Sigmoid colon (tissue), 7 donors: ENCODE measurements at regions of chr7 and their contacts with region 1.

Region 1: DNA sequence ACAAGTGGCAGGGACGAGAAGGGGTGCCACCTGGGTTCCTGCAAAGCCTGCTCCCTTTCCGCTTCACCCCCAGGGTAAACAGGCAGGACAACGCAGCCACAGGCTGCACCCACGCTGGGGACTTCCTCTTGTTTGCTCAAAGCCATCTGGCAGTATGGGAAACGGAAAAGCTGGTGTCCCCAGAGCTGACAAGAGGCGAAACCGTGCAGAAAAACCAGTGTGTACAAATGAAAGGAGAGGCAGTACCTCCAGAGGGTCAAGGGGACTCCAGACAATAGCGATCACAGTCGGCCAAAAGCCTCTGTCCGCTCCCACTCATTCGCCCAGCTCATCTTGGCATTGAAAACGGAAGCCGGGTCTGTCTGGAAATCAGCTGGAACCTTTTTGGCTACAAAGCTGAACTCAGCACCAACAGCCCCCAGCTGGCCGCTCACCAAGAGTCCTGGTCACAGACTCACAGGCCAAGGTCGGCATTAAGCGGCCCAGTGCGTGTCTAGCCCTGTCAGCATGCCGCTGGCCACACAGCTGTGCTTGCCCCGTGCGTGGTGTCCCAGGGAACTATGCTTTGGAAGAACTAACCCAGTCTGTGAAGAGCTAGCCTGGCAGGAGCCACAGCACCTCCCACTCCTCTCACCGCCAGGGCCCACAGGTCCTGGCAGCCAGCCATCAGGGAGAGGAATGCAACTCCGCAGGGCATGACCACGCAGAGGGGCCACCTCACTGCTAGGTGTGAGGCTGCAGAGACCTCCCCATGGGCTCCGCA is 10.4 kb downstream of the TNS3 start:
- DNase-seq: peak; percentile 84
- H3K4me3 ChIP-seq: peak overlapping the region in 1 of 4 donors; percentile 23
- H3K27ac ChIP-seq: peak overlapping the region; percentile 63 to 87 (median 78)
- H3K4me1 ChIP-seq: peaks cover 0 to 68% (median 63%) of the 10 kb centered on the region in 4 donors
- H3K27me3 ChIP-seq: no peaks in the 10 kb centered on the region
- CTCF ChIP-seq: no peak
- EP300 ChIP-seq: no peak
- POLR2A ChIP-seq: no peak

Region 2: GRCh38 chr7:47435889-47436312 is 135.6 kb before region 1 on chr7:
- intact Hi-C with region 1: loop called (anchors 10 kb)
- DNase-seq: peak; percentile 87
- H3K4me3 ChIP-seq: no peak overlapping the region
- H3K27ac ChIP-seq: no peak overlapping the region
- H3K4me1 ChIP-seq: peaks cover 0 to 8% (median 5%) of the 10 kb centered on the region in 4 donors
- H3K27me3 ChIP-seq: no peaks in the 10 kb centered on the region
- CTCF ChIP-seq: peak; percentile 57 to 85 (median 80)
- EP300 ChIP-seq: no peak
- POLR2A ChIP-seq: no peak

Region 3: DNA sequence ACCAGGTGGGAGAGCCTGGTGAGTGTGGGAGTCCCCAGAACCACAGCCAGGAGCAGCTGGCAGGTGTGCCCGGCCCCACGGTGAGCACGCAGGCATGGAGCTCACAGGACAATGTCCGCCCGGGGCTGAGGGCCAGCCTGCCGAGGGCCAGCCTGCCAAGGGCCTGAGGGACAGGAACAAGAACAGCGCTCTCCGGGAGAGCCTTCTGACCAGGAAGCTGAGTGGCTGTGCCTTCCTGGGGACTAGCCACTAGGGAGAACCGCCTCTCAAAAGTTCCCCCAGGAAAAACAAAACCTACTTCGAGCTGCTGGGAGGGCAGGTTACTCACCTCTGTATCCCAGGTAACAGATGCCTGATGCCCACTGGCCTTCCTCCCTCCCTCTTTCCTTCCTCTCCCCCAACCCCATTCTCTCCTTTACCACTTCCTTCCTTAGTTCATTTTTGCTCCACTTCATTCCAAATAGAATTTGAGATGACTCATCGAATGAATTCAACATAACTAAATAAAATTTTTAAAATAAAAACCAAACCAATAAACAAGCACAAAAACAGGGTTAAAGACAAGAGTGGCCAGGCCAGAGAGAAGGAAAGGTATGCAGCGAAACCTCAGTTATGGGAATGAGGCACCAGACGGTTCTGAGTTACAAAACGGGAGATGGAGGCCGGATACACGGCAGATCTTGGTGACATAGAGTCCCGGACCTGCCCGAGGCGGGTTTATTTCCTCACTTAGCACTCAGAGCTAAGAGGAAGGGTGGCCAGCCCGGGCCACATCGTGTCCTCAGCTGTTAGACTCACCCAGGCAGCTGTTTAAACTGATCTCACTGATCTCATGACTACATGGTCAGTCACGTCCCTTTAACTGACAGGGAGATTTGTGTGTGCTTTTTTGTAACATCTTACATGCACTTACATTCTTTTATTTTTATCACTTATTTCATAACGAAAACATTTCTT is 118.1 kb before region 1 on chr7:
- intact Hi-C with region 1: no loop called
- DNase-seq: peak; percentile 89
- H3K4me3 ChIP-seq: peak overlapping the region in 1 of 4 donors; percentile 16
- H3K27ac ChIP-seq: peak overlapping the region; percentile 52 to 70 (median 61)
- H3K4me1 ChIP-seq: peaks cover 0 to 59% (median 51%) of the 10 kb centered on the region in 4 donors
- H3K27me3 ChIP-seq: no peaks in the 10 kb centered on the region
- CTCF ChIP-seq: no peak
- EP300 ChIP-seq: no peak
- POLR2A ChIP-seq: no peak

Region 4: GRCh38 chr7:47536661-47537611 is 34.6 kb before region 1 on chr7:
- intact Hi-C with region 1: loop called (anchors 5 kb)
- DNase-seq: peak; percentile 80
- H3K4me3 ChIP-seq: peak overlapping the region; percentile 45 to 62 (median 54)
- H3K27ac ChIP-seq: peak overlapping the region; percentile 8 to 62 (median 26)
- H3K4me1 ChIP-seq: peaks cover 0 to 49% (median 32%) of the 10 kb centered on the region in 4 donors
- H3K27me3 ChIP-seq: no peaks in the 10 kb centered on the region
- CTCF ChIP-seq: no peak
- EP300 ChIP-seq: no peak
- POLR2A ChIP-seq: no peak

Region 5: GRCh38 chr7:47610506-47611044 is 39.1 kb after region 1 on chr7:
- intact Hi-C with region 1: no loop called
- DNase-seq: no peak
- H3K4me3 ChIP-seq: no peak overlapping the region
- H3K27ac ChIP-seq: peak overlapping the region; percentile 39 to 81 (median 72)
- H3K4me1 ChIP-seq: peaks cover 0 to 44% (median 32%) of the 10 kb centered on the region in 4 donors
- H3K27me3 ChIP-seq: no peaks in the 10 kb centered on the region
- CTCF ChIP-seq: no peak
- EP300 ChIP-seq: no peak
- POLR2A ChIP-seq: no peak

Region 6: GRCh38 chr7:47635091-47636080 is 63.9 kb after region 1 on chr7:
- intact Hi-C with region 1: loop called (anchors 10 kb)
- DNase-seq: peak; percentile 80
- H3K4me3 ChIP-seq: no peak overlapping the region
- H3K27ac ChIP-seq: peak overlapping the region; percentile 75 to 88 (median 83)
- H3K4me1 ChIP-seq: peaks cover 0 to 66% (median 58%) of the 10 kb centered on the region in 4 donors
- H3K27me3 ChIP-seq: no peaks in the 10 kb centered on the region
- CTCF ChIP-seq: no peak
- EP300 ChIP-seq: no peak
- POLR2A ChIP-seq: no peak

Region 7: GRCh38 chr7:47714669-47715607 is 143.4 kb after region 1 on chr7:
- intact Hi-C with region 1: loop called (anchors 10 kb)
- DNase-seq: no peak
- H3K4me3 ChIP-seq: no peak overlapping the region
- H3K27ac ChIP-seq: no peak overlapping the region
- H3K4me1 ChIP-seq: peaks cover 0 to 19% (median 9%) of the 10 kb centered on the region in 4 donors
- H3K27me3 ChIP-seq: no peaks in the 10 kb centered on the region
- CTCF ChIP-seq: no peak
- EP300 ChIP-seq: no peak
- POLR2A ChIP-seq: no peak

Region 8: GRCh38 chr7:47786557-47787248 is 215.2 kb after region 1 on chr7:
- intact Hi-C with region 1: loop called (anchors 5 kb)
- DNase-seq: peak; percentile 88
- H3K4me3 ChIP-seq: no peak overlapping the region
- H3K27ac ChIP-seq: peak overlapping the region; percentile 79 to 88 (median 82)
- H3K4me1 ChIP-seq: peaks cover 0 to 59% (median 55%) of the 10 kb centered on the region in 4 donors
- H3K27me3 ChIP-seq: no peaks in the 10 kb centered on the region
- CTCF ChIP-seq: no peak
- EP300 ChIP-seq: peak in 1 of 4 donors; percentile 3
- POLR2A ChIP-seq: no peak